ENCODE measurements at regions of chr11 and their contacts with region 1.

Region 1: DNA sequence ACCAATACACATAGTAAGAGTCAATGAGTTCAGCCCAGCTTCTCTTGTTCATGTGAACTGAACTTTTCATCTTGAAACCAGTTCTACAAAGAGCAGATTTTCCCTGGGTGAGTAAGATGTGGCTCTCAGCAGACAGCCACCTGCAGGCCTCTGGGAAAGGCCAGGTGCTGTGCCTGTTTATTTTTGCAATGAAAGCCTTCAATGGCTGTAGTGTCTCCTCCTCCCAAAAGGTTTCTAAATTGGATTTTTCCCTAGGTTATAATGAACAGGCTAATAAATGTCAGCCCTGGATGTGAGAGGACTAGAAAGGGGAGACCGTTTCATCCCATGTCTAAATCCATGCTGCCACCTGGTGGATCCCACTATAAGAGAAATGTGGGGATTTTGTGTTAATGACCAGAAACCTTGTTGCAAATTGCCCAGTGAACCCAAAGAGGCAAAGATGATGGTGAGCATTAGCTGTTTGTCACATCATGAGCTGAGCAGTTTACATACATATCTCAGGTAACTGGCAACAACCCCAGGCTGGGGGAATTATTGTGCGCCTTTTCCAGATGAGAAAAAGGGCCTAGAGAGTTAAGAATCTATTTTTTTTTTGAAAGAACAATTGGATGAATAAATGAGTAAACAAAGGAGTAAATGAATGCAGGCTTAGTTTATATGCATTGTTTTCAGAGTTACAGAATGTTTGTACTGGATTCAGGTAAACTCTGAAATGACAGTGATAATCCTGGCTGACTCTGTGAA is 12.7 kb downstream of the C11orf91 start:
- DNase-seq: no peak
- H3K4me3 Mint-ChIP-seq: no peak overlapping the region
- H3K27ac Mint-ChIP-seq: no peak overlapping the region
- H3K4me1 Mint-ChIP-seq: peaks cover 10% of the 10 kb centered on the region
- H3K27me3 Mint-ChIP-seq: peaks cover 8% of the 10 kb centered on the region

Region 2: GRCh38 chr11:33373636-33374035 is 314.3 kb before region 1 on chr11:
- intact Hi-C with region 1: loop called (anchors 5 kb)
- DNase-seq: no peak
- H3K4me3 Mint-ChIP-seq: no peak overlapping the region
- H3K27ac Mint-ChIP-seq: no peak overlapping the region
- H3K4me1 Mint-ChIP-seq: peaks cover 4% of the 10 kb centered on the region
- H3K27me3 Mint-ChIP-seq: peaks cover 50% of the 10 kb centered on the region

Region 3: GRCh38 chr11:33445761-33446161 is 242.1 kb before region 1 on chr11:
- intact Hi-C with region 1: no loop called
- DNase-seq: no peak
- H3K4me3 Mint-ChIP-seq: no peak overlapping the region
- H3K27ac Mint-ChIP-seq: no peak overlapping the region
- H3K4me1 Mint-ChIP-seq: no peaks in the 10 kb centered on the region
- H3K27me3 Mint-ChIP-seq: peaks cover 2% of the 10 kb centered on the region

Region 4: DNA sequence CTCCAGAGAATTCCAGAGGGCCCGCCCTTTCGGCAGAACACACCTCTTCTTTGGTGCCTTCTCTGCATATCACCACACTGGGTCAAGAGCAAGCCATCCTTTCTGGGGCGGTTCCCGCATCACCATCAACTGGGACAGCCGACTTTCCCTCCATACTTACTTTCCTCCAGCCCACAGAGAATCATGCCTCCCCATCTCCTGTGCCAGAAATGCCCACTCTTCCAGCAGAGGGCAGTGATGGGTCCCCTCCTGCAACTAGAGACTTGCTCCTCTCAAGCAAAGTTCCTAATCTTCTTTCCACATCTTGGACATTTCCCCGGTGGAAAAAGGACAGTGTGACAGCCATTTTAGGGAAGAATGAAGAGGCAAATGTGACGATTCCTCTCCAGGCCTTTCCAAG is 145.0 kb before region 1 on chr11:
- intact Hi-C with region 1: loop called (anchors 10 kb)
- DNase-seq: no peak
- H3K4me3 Mint-ChIP-seq: no peak overlapping the region
- H3K27ac Mint-ChIP-seq: no peak overlapping the region
- H3K4me1 Mint-ChIP-seq: no peaks in the 10 kb centered on the region
- H3K27me3 Mint-ChIP-seq: peaks cover 6% of the 10 kb centered on the region

Region 5: GRCh38 chr11:33736148-33736809 is 48.4 kb after region 1 on chr11 and contains the start of gene CD59:
- intact Hi-C with region 1: loop called (anchors 2 kb)
- DNase-seq: peak; percentile 79
- H3K4me3 Mint-ChIP-seq: peak within 1 kb of the TSS; percentile 87
- H3K27ac Mint-ChIP-seq: peak within 1 kb of the TSS; percentile 86
- H3K4me1 Mint-ChIP-seq: peaks cover 35% of the 10 kb centered on the region
- H3K27me3 Mint-ChIP-seq: peaks cover 12% of the 10 kb centered on the region
- total RNA-seq, gene CD59: 165 and 173 TPM in 2 replicates

Region 6: DNA sequence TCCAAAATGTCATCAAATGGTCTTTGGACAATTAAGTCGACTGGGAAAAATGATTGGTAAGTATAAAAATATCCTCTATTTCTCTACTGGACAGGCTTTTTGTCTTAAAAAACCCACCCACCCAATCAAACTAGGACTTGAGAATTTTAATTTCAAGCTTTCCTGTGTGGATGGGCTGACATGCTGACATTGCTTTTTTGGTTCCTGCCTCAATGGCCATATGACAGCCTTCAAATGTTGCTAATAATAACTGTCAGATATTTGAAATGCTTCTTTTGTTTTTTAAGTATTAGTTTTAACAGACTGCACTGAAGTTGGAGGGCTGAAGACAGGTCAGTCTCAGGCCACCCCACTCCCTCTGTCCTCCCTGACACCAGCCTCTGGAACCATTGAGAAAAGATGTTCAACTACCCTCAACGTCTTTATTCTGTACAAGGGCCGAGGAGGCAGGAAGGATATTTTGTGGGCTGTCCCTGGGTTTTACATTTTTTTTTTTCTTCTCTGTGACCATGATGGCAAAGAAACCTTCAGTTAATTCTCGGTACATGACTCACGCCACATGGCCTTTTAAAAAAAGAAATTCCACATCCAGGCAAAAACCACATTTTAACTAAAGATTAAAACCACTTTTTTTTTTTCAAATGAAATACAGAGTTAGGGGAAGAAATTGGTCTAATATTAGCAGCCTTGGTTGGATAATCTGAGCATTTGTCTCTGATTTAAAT is 1601.1 kb after region 1 on chr11:
- intact Hi-C with region 1: no loop called
- DNase-seq: no peak
- H3K4me3 Mint-ChIP-seq: no peak overlapping the region
- H3K27ac Mint-ChIP-seq: peak overlapping the region; percentile 44
- H3K4me1 Mint-ChIP-seq: peaks cover 45% of the 10 kb centered on the region
- H3K27me3 Mint-ChIP-seq: no peaks in the 10 kb centered on the region

Measured in activated T-helper 2 cell treated with anti-CD3 and anti-CD28 coated beads, Interferon-gamma antibody, Interleukin-2, Interleukin-4, amounts not matched to agents 10 μg/mL and 5 μg/mL and 100 μg/mL, durations not matched to agents 14 hours and 24 hours and 36 hours (primary cell).